Right ventricle myocardium inferior (tissue), 1 donor: ENCODE measurements at regions of chr6 and their contacts with region 1.

Region 1: GRCh38 chr6:44234101-44235025 is 11.0 kb downstream of the SLC29A1 start:
- DNase-seq: peak; percentile 89
- ATAC-seq: peak; percentile 59

Region 2: GRCh38 chr6:43916924-43917877 is 317.2 kb before region 1 on chr6:
- intact Hi-C with region 1: no loop called
- DNase-seq: no peak
- ATAC-seq: no peak

Region 3: GRCh38 chr6:44221291-44221960 is 12.9 kb before region 1 on chr6:
- intact Hi-C with region 1: loop called (anchors 1 kb)
- DNase-seq: peak; percentile 92
- ATAC-seq: peak; percentile 62